Dendritic cell treated with granulocyte-macrophage colony-stimulating factor and Interleukin-4, amounts not matched to agents 40 ng/mL and 50 ng/mL, for 4 days (primary cell): ENCODE measurements at regions of chr1 and their contacts with region 1.

Region 1: GRCh38 chr1:234772345-234773147 is 162.6 kb upstream of the IRF2BP2 start:
- H3K4me3 Mint-ChIP-seq: peak overlapping the region; percentile 2
- H3K27ac Mint-ChIP-seq: no peak overlapping the region
- H3K4me1 Mint-ChIP-seq: peaks cover 56% of the 10 kb centered on the region
- H3K27me3 Mint-ChIP-seq: no peaks in the 10 kb centered on the region

Region 2: GRCh38 chr1:234730770-234731568 is 41.6 kb before region 1 on chr1:
- intact Hi-C with region 1: loop called (anchors 2 kb)
- H3K4me3 Mint-ChIP-seq: no peak overlapping the region
- H3K27ac Mint-ChIP-seq: peak overlapping the region; percentile 99
- H3K4me1 Mint-ChIP-seq: peaks cover 89% of the 10 kb centered on the region
- H3K27me3 Mint-ChIP-seq: no peaks in the 10 kb centered on the region

Region 3: DNA sequence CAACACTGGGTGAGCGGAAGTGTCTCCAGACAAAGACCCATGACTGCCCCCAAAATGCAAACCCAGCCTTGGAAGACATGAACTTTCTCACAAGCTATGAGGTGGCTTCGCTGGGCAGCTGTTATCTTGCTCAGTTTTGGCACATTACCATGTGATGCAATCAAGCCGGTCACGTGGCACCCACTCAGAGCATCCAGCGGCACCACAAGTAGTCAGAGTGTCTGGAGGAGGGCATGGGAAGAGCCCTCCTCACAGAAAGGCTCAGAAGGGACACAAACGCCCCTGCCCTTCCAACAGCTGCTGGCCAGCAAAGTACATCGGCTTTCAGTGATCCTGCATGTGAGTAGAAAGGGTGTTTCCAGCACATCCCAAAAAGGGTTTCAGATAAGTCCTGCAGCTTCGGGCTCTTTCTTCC is 17.1 kb before region 1 on chr1:
- intact Hi-C with region 1: no loop called
- H3K4me3 Mint-ChIP-seq: no peak overlapping the region
- H3K27ac Mint-ChIP-seq: no peak overlapping the region
- H3K4me1 Mint-ChIP-seq: peaks cover 40% of the 10 kb centered on the region
- H3K27me3 Mint-ChIP-seq: no peaks in the 10 kb centered on the region

Region 4: DNA sequence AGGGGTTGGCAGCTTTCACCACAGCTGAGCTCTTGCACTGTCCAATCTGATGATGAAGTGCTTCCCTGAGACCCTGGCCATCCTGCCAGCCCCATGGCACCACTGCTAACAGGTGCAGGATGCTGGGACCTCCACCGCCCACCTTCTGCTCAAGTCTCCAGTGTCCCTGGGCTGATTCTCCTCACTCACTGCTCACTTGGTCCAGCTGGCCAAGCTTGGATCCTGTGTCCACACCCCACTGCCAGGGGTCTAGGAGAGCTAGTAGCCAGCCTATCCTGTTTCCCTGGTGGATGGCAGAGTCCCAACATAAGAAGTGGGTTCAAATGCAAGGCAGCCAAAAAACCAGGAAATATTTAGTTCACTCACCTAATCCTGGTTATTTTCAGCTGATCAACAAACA is 54.6 kb after region 1 on chr1:
- intact Hi-C with region 1: no loop called
- H3K4me3 Mint-ChIP-seq: no peak overlapping the region
- H3K27ac Mint-ChIP-seq: peak overlapping the region; percentile 21
- H3K4me1 Mint-ChIP-seq: peaks cover 27% of the 10 kb centered on the region
- H3K27me3 Mint-ChIP-seq: no peaks in the 10 kb centered on the region